Activated naive CD4-positive, alpha-beta T cell treated with anti-CD3 and anti-CD28 coated beads for 36 hours (primary cell): ENCODE measurements at regions of chr6 and their contacts with region 1.

Region 1: GRCh38 chr6:34248727-34249551 is at the start of gene SMIM29:
- DNase-seq: peak; percentile 98
- H3K4me3 Mint-ChIP-seq: peak within 1 kb of the TSS; percentile 93
- H3K27ac Mint-ChIP-seq: peak within 1 kb of the TSS; percentile 88
- H3K4me1 Mint-ChIP-seq: peaks cover 49% of the 10 kb centered on the region
- H3K27me3 Mint-ChIP-seq: no peaks in the 10 kb centered on the region
- total RNA-seq, gene SMIM29: 11.7 to 13.8 TPM

Region 2: GRCh38 chr6:33200219-33201146 is 1048.5 kb before region 1 on chr6 and contains the starts of genes RXRB and SLC39A7:
- CTCF ChIA-PET with region 1: no interaction called
- intact Hi-C with region 1: loop called (anchors 10 kb)
- DNase-seq: peak; percentile 100
- H3K4me3 Mint-ChIP-seq: peak within 1 kb of the TSS; percentile 98
- H3K27ac Mint-ChIP-seq: peak within 1 kb of the TSS; percentile 97
- H3K4me1 Mint-ChIP-seq: peaks cover 60% of the 10 kb centered on the region
- H3K27me3 Mint-ChIP-seq: no peaks in the 10 kb centered on the region
- total RNA-seq, gene RXRB: 50.4 to 50.6 TPM
- total RNA-seq, gene SLC39A7: 35.9 to 39.5 TPM

Region 3: DNA sequence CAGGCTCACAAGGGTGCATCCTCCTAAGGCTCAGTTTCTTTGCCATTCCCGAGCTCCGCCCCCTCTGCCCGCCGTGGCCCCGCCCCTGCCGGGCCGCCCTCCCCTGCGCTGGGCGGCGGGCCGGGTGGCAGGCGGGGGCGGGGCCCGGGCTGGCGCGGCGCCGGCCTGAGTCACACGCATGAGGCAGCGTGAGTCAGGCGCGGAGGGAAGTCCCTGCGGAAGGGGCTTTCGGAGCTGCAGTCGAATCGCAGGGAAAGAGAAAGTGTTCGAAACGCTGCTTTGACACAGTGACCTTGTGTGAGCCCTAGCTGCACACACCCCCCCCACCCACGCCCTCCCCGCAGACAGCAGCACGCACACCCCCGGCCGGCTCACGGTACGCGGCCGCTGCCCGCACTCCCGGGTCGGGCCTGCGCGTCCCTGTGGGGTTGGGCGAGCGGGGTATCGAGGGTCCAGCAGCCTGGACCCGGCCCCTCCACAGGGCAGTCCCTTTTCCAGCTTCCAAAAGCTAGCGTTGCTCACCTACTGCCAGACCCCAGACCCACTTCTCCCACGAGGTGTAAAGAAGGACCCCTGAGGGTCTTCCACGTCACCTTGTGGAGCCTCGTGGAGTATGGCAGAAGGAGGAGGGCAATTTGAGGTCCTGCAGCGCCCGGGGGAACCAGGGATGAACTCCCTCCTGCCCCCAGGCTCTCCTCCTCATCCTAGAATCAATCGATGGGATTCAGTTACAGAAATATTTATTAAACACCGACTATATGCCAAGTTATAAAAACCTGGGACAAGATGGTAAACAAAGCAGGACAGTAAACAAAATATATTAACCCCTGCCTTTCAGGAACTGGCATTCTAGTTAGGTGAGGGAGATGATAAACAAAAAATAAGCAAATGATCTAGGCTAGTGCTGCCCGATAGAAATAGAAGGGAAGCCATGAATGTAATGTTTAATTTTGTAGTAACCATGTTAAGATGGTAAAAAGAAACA is 24.7 kb before region 1 on chr6:
- CTCF ChIA-PET with region 1: interaction called, 4 read pairs
- intact Hi-C with region 1: loop called (anchors 1 kb)
- DNase-seq: peak; percentile 96
- H3K4me3 Mint-ChIP-seq: peak overlapping the region; percentile 69
- H3K27ac Mint-ChIP-seq: peak overlapping the region; percentile 92
- H3K4me1 Mint-ChIP-seq: peaks cover 43% of the 10 kb centered on the region
- H3K27me3 Mint-ChIP-seq: no peaks in the 10 kb centered on the region

Region 4: GRCh38 chr6:34392497-34393190 is 143.7 kb after region 1 on chr6 and contains the start of gene NUDT3:
- CTCF ChIA-PET with region 1: interaction called, 9 read pairs
- intact Hi-C with region 1: loop called (anchors 1 kb)
- DNase-seq: peak; percentile 92
- H3K4me3 Mint-ChIP-seq: peak within 1 kb of the TSS; percentile 66
- H3K27ac Mint-ChIP-seq: peak within 1 kb of the TSS; percentile 88
- H3K4me1 Mint-ChIP-seq: peaks cover 27% of the 10 kb centered on the region
- H3K27me3 Mint-ChIP-seq: no peaks in the 10 kb centered on the region
- total RNA-seq, gene NUDT3: 14.0 to 14.3 TPM

Region 5: DNA sequence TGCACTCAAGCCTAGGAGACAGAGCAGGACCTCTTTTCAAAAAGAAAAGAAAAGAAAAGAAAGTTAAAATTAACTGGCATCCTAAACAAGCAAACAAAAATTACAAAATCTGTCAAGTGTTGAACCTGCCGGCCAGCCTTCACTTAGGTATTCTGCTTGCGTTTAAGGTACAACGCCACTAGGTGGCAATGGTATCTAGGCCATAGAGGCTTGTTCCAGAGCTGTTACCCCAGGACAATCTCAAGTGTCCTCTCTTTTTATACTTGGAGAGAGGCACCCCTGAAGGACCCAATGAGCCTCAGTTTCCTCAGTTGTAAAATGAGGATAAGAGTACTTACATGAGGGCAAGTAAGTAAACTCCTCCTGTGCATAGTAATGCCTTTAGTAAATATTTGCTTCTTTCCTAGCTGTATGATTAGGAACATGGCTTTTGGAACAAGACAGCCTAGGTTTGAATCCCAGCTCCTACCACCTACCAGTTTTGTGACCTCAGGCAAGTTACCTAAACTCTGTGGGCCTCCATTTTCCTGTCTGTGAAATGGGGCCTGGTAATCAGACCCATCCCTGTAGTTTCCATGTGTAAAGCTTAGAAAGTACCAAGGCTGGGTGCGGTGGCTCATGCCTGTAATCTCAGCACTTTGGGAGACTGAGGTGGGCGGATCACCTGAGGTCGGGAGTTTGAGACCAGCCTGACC is 211.1 kb after region 1 on chr6:
- CTCF ChIA-PET with region 1: interaction called, 8 read pairs
- intact Hi-C with region 1: loop called (anchors 1 kb)
- DNase-seq: peak; percentile 75
- H3K4me3 Mint-ChIP-seq: no peak overlapping the region
- H3K27ac Mint-ChIP-seq: no peak overlapping the region
- H3K4me1 Mint-ChIP-seq: peaks cover 1% of the 10 kb centered on the region
- H3K27me3 Mint-ChIP-seq: peaks cover 10% of the 10 kb centered on the region

Region 6: DNA sequence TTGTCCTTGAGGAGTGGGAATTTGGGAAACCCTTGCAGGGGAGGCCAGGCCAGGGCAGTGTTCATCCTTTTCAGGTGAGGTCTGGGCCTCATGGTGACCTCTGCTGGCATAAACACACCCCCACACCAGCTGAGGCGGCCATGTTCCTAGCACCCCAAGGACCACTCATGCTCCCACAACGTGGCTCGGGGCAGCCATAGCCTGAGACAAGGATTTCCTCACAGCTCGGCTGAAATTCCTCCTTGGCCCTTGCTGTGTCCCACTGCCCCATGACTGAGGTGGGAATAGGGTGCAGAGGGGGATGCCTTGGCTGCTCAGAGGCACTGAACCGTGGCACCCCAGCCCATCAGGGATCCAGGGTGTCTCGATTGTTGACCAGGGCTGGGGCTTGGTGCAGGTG is 334.5 kb after region 1 on chr6:
- CTCF ChIA-PET with region 1: interaction called, 3 read pairs
- intact Hi-C with region 1: loop called (anchors 1 kb)
- DNase-seq: peak; percentile 24
- H3K4me3 Mint-ChIP-seq: no peak overlapping the region
- H3K27ac Mint-ChIP-seq: no peak overlapping the region
- H3K4me1 Mint-ChIP-seq: peaks cover 6% of the 10 kb centered on the region
- H3K27me3 Mint-ChIP-seq: no peaks in the 10 kb centered on the region

Region 7: DNA sequence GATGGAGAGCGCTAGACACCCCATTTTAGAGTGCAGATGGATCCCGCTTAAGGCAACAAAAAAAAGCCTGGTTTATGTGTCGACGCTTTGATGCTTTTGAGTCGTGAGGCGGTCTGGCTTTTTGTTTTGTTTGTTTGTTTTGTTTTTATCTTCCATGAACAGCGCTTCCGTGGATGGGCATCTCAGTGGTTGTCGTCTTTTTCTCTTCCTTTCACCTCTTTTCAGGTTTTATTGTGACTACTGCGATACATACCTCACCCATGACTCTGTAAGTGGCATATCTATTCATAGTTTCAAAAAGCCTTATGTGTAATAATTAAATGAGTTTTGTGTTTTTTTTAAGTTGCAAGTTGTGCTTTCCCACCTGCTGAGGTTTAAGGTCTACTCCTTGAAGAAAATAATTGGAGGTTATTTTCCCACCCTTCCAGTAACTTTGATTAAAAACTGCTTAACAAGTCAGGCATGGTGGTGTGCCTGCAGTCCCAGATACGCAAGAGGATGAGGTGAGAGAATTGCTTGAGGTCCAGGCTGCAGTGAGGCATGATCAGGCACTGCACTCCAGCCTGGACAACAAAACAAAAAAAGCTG is 508.8 kb after region 1 on chr6:
- CTCF ChIA-PET with region 1: no interaction called
- intact Hi-C with region 1: loop called (anchors 1 kb)
- DNase-seq: no peak
- H3K4me3 Mint-ChIP-seq: no peak overlapping the region
- H3K27ac Mint-ChIP-seq: no peak overlapping the region
- H3K4me1 Mint-ChIP-seq: peaks cover 16% of the 10 kb centered on the region
- H3K27me3 Mint-ChIP-seq: no peaks in the 10 kb centered on the region

Region 8: DNA sequence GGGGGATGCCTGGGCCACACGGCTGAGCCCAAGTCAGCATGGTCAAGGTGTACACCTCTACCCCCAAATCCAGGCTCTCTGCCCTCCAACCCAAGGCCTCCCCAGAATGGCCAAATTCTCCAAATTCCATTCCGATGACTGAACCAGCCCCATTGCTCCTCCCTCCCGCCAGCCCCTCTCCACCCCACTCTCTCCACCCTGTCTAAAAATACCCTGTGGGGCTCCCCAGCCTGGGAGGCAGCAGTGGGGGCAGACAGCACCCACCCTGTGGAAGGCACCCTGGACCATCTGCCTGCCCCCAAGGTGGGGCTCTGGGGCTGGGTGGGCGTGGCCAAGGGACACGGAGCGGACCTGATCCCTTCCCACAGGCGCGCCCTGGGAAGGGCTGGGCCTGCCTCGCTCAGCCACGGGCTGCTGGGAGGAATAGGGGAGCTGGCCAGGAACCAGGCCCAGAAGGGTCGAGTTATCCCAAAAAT is 1236.5 kb after region 1 on chr6:
- CTCF ChIA-PET with region 1: no interaction called
- intact Hi-C with region 1: no loop called
- DNase-seq: no peak
- H3K4me3 Mint-ChIP-seq: no peak overlapping the region
- H3K27ac Mint-ChIP-seq: no peak overlapping the region
- H3K4me1 Mint-ChIP-seq: peaks cover 3% of the 10 kb centered on the region
- H3K27me3 Mint-ChIP-seq: no peaks in the 10 kb centered on the region